Naive thymus-derived CD4-positive, alpha-beta T cell (primary cell): ENCODE measurements at regions of chr2 and their contacts with region 1.

Region 1: GRCh38 chr2:176096986-176097819 is 2.4 kb upstream of the HOXD12 start:
- DNase-seq: peak in 4 of 9 donors; percentile 47 to 63 (median 59)
- ATAC-seq: peak; percentile 81
- H3K4me3 ChIP-seq: peak overlapping the region; percentile 35
- H3K4me3 Mint-ChIP-seq: peak overlapping the region; percentile 72 to 86 (median 76)
- H3K27ac ChIP-seq: no peak overlapping the region
- H3K27ac Mint-ChIP-seq: peak overlapping the region in 1 of 9 donors; percentile 30
- H3K4me1 ChIP-seq: peaks cover 14 to 18% of the 10 kb centered on the region in 2 donors
- H3K4me1 Mint-ChIP-seq: peaks cover 17 to 35% (median 29%) of the 10 kb centered on the region in 7 donors
- H3K27me3 ChIP-seq: peaks cover 38 to 60% of the 10 kb centered on the region in 2 donors
- H3K27me3 Mint-ChIP-seq: peaks cover 78 to 88% (median 81%) of the 10 kb centered on the region in 5 donors

Region 2: GRCh38 chr2:174697255-174697654 is 1399.9 kb before region 1 on chr2:
- CTCF ChIA-PET with region 1: no interaction called
- POLR2A ChIA-PET with region 1: no interaction called
- intact Hi-C with region 1: loop called in 1 of 2 experiments (anchors 5 kb)
- DNase-seq: peak in 8 of 9 donors; percentile 38 to 60 (median 49)
- ATAC-seq: peak; percentile 93
- H3K4me3 ChIP-seq: no peak overlapping the region
- H3K4me3 Mint-ChIP-seq: no peak overlapping the region
- H3K27ac ChIP-seq: no peak overlapping the region
- H3K27ac Mint-ChIP-seq: peak overlapping the region in 1 of 9 donors; percentile 55
- H3K4me1 ChIP-seq: no peaks in the 10 kb centered on the region
- H3K4me1 Mint-ChIP-seq: peaks cover 0 to 7% (median 0%) of the 10 kb centered on the region in 7 donors
- H3K27me3 ChIP-seq: no peaks in the 10 kb centered on the region
- H3K27me3 Mint-ChIP-seq: peaks cover 0 to 40% (median 0%) of the 10 kb centered on the region in 5 donors

Region 3: GRCh38 chr2:175111200-175111657 is 986.0 kb before region 1 on chr2:
- CTCF ChIA-PET with region 1: no interaction called
- POLR2A ChIA-PET with region 1: no interaction called
- intact Hi-C with region 1: loop called in 1 of 2 experiments (anchors 1 kb)
- DNase-seq: peak in 6 of 9 donors; percentile 23 to 59 (median 48)
- ATAC-seq: peak; percentile 67
- H3K4me3 ChIP-seq: no peak overlapping the region
- H3K4me3 Mint-ChIP-seq: no peak overlapping the region
- H3K27ac ChIP-seq: no peak overlapping the region
- H3K27ac Mint-ChIP-seq: peak overlapping the region in 7 of 9 donors; percentile 7 to 74 (median 39)
- H3K4me1 ChIP-seq: no peaks in the 10 kb centered on the region
- H3K4me1 Mint-ChIP-seq: peaks cover 0 to 9% (median 4%) of the 10 kb centered on the region in 7 donors
- H3K27me3 ChIP-seq: no peaks in the 10 kb centered on the region
- H3K27me3 Mint-ChIP-seq: no peaks in the 10 kb centered on the region

Region 4: GRCh38 chr2:175366815-175367214 is 730.4 kb before region 1 on chr2:
- CTCF ChIA-PET with region 1: interaction called, 4 read pairs
- POLR2A ChIA-PET with region 1: no interaction called
- intact Hi-C with region 1: loop called in 1 of 2 experiments (anchors 2 kb)
- DNase-seq: peak in 3 of 9 donors; percentile 6 to 22 (median 14)
- ATAC-seq: peak; percentile 76
- H3K4me3 ChIP-seq: no peak overlapping the region
- H3K4me3 Mint-ChIP-seq: no peak overlapping the region
- H3K27ac ChIP-seq: no peak overlapping the region
- H3K27ac Mint-ChIP-seq: no peak overlapping the region
- H3K4me1 ChIP-seq: no peaks in the 10 kb centered on the region
- H3K4me1 Mint-ChIP-seq: no peaks in the 10 kb centered on the region
- H3K27me3 ChIP-seq: peaks cover 0 to 5% of the 10 kb centered on the region in 2 donors
- H3K27me3 Mint-ChIP-seq: peaks cover 13 to 32% (median 20%) of the 10 kb centered on the region in 5 donors

Region 5: GRCh38 chr2:175690113-175690837 is 406.9 kb before region 1 on chr2:
- CTCF ChIA-PET with region 1: interaction called, 25 read pairs
- POLR2A ChIA-PET with region 1: interaction called, 4 read pairs
- intact Hi-C with region 1: loop called in 1 of 2 experiments (anchors 1 kb)
- DNase-seq: peak in 7 of 9 donors; percentile 5 to 44 (median 28)
- ATAC-seq: peak; percentile 61
- H3K4me3 ChIP-seq: no peak overlapping the region
- H3K4me3 Mint-ChIP-seq: no peak overlapping the region
- H3K27ac ChIP-seq: no peak overlapping the region
- H3K27ac Mint-ChIP-seq: no peak overlapping the region
- H3K4me1 ChIP-seq: no peaks in the 10 kb centered on the region
- H3K4me1 Mint-ChIP-seq: peaks cover 0 to 2% (median 0%) of the 10 kb centered on the region in 7 donors
- H3K27me3 ChIP-seq: no peaks in the 10 kb centered on the region
- H3K27me3 Mint-ChIP-seq: peaks cover 14 to 47% (median 32%) of the 10 kb centered on the region in 5 donors

Region 6: DNA sequence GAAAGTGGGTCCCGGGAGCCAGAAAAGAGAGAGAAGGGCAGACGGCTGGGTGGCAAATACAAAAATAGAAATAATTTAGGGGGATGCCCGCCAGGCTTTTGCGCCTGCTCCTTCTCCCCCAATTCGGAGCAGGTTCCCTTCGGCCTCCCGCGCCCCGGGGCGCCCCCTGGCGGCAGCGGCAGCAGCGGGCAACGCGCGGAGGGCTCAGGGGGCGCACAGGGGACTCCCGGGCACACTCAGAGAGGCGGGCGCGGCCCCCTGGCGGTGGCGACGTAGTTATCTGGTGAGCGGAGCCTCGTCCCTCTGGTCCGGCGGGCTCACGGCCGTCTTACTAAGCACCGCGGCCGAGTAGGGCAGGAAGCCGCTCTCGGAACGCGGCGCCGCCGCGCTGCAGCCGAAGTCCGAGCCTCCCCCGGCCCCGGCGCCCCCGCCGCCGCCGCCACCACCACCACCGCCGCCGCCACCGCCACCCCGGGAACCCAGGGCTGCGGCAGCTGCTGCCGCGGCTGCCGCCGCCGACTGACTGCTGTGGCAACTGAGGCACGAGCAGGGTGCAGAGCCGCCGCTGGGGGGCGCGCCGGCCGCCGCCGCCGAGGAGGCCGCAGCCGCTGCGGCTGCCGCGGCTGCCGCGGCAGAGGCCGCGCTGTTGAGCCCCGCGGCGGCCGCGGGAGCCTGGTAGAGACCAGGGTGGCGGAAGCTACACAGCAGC is 17.2 kb before region 1 on chr2:
- CTCF ChIA-PET with region 1: no interaction called
- POLR2A ChIA-PET with region 1: no interaction called
- intact Hi-C with region 1: loop called in 1 of 2 experiments (anchors 2 kb)
- DNase-seq: no peak
- ATAC-seq: peak; percentile 48
- H3K4me3 ChIP-seq: no peak overlapping the region
- H3K4me3 Mint-ChIP-seq: peak overlapping the region; percentile 64 to 82 (median 76)
- H3K27ac ChIP-seq: no peak overlapping the region
- H3K27ac Mint-ChIP-seq: peak overlapping the region in 6 of 9 donors; percentile 58 to 98 (median 90)
- H3K4me1 ChIP-seq: peaks cover 0 to 7% of the 10 kb centered on the region in 2 donors
- H3K4me1 Mint-ChIP-seq: peaks cover 0 to 29% (median 15%) of the 10 kb centered on the region in 7 donors
- H3K27me3 ChIP-seq: peaks cover 41 to 79% of the 10 kb centered on the region in 2 donors
- H3K27me3 Mint-ChIP-seq: peaks cover 67 to 83% (median 80%) of the 10 kb centered on the region in 5 donors